Head of caudate nucleus (tissue), 42 donors: ENCODE measurements at regions of chr13 and their contacts with region 1.

Region 1: DNA sequence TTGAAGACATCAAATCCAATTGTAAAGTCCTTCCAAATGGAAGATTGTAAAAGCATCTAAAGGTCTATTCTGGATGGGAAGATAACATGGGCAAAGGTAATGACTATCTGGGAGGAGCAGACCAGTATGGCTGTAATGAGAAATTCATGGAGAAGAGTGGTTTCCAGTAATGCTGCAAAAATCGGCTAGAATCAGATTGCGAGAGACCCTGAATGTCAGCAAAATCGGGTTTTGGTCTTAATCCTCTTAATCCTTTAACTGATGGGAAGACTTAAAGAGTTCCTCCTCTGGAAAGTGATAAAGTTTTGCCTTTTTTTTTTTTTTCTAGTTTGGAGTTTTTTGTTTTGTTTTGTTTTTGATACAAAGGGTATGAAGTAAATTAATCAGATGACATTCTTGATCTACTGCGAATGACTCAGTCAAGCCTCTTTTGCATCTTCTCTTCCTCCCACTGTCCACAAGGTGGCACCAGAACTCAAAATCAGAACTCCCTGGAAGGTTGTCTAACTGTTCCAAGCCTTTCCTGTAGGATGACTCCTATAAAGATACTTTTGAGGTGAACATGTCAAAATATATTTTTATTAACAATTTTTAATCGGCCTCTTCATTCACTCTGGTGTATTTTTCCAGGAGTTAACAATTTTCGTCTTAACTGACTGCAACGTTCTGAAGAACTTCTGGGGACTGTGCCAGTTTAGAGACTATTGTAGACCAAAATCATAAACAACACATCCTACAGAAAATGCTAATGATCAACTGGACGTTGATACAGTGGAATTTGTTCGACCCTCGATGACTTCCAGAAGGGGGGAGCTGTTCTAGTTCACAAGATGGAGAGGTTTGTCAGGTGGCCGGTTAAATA is 213.3 kb upstream of the MIR17HG start:
- DNase-seq: peak in 38 of 42 donors; percentile 13 to 86 (median 60)

Region 2: DNA sequence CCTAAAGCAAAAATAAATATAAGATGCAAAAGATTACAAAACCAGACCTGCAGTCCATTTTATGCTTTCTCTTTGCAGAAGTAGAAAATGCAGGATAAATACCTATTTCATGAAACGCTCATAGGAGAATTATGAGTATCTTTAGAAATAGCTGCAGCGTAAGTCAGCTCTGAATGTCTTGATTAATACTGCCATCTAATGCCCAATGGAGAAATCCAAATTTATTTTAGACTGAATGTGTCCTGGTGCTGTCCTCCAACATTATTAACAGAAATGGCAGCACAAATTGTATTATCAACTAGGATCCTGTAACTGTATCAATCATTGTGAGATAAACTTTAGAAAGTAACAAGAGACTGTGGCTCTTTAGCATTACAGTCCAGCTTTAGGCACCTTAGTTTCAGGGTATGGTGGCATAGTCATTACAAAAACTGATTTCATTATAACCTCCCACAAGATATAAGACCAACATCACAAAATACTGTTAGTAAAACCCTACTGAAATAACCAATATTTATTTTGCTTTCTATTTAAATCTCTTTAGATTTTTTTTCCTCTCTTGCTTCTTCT is 51.2 kb after region 1 on chr13:
- intact Hi-C with region 1: loop called (anchors 5 kb)
- DNase-seq: peak in 1 of 42 donors; percentile 12